Panc1 (cell line): ENCODE measurements at regions of chr10 and their contacts with region 1.

Region 1: DNA sequence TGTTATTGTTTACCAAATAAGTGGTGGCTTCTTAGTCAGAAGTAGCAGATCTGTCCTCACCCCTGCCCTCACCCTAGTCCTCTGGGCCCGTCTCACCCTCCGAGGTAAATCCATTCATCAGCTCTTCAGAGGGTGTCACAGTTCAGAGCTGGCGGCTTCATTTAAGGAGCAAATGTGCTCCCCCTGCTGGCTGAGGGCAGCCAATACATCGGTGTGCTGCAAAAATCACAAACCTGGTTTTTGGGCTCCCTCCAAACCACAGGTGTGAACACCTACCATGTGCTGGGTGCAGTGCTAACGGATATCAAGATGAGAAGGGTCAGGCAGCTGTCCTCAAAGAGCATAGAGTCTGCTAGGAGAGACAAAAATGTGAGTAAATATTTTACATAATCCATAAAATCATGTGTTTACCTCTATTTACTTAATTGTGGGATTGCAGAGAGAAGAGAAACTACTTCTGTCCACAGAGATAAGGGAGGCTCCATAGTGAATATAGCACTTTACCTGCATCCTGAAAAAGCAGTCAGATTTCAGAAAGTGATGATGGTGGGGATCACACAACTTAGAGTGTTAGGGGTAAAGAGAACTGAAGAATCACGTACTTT is 15.5 kb upstream of the CRTAC1 start:
- DNase-seq: peak; percentile 53
- ATAC-seq: peak; percentile 86
- H3K4me3 ChIP-seq: no peak overlapping the region
- H3K27ac ChIP-seq: no peak overlapping the region
- H3K4me1 ChIP-seq: no peaks in the 10 kb centered on the region
- H3K27me3 ChIP-seq: peaks cover 25% of the 10 kb centered on the region
- CTCF ChIP-seq: peak; percentile 99

Region 2: DNA sequence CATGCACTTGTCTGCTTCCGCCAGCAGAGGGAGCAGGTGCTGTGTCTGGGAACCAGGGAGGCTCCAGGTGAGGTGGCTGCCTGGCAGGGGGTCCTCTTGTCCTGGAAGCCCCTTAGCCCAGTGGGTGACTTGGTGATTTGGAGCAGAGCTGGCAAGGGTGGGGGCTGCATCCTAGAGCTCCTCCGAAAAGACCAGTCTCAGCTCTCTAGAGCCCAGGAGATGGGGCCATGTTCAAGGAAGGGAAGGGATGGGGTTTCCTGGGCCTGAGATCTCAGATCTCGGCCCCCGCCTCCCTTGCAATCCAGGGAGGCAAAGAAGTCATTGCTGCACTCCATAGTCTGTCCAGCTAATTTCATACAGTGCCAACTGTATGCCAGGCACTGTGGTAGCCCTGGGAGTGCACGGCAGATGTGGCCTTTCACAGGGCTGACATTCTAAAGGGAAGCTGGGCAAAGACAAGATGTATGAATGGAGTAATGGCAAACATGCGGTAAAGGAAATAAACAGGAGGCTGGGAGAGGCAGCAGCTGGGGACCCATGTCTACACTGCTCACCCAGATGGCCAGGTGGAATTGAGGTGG is 253.7 kb before region 1 on chr10:
- CTCF ChIA-PET with region 1: interaction called, 4 read pairs
- POLR2A ChIA-PET with region 1: no interaction called
- in situ Hi-C with region 1: no loop called
- intact Hi-C with region 1: loop called (anchors 10 kb)
- DNase-seq: peak; percentile 63
- ATAC-seq: peak; percentile 32
- H3K4me3 ChIP-seq: no peak overlapping the region
- H3K27ac ChIP-seq: no peak overlapping the region
- H3K4me1 ChIP-seq: no peaks in the 10 kb centered on the region
- H3K27me3 ChIP-seq: no peaks in the 10 kb centered on the region; the same call in 1 of the 2 replicates
- CTCF ChIP-seq: peak; percentile 99

Region 3: GRCh38 chr10:97888641-97889262 is 157.1 kb before region 1 on chr10:
- CTCF ChIA-PET with region 1: no interaction called
- POLR2A ChIA-PET with region 1: no interaction called
- in situ Hi-C with region 1: no loop called
- intact Hi-C with region 1: no loop called
- DNase-seq: no peak
- ATAC-seq: peak; percentile 64
- H3K4me3 ChIP-seq: no peak overlapping the region
- H3K27ac ChIP-seq: no peak overlapping the region
- H3K4me1 ChIP-seq: peaks cover 4% of the 10 kb centered on the region; the same call in 1 of the 2 replicates
- H3K27me3 ChIP-seq: no peaks in the 10 kb centered on the region; the same call in 1 of the 2 replicates
- CTCF ChIP-seq: no peak

Region 4: GRCh38 chr10:97914837-97915211 is 131.1 kb before region 1 on chr10:
- CTCF ChIA-PET with region 1: interaction called, 53 read pairs
- POLR2A ChIA-PET with region 1: no interaction called
- in situ Hi-C with region 1: no loop called
- intact Hi-C with region 1: loop called (anchors 1 kb)
- DNase-seq: peak; percentile 35
- ATAC-seq: peak; percentile 93
- H3K4me3 ChIP-seq: no peak overlapping the region
- H3K27ac ChIP-seq: no peak overlapping the region
- H3K4me1 ChIP-seq: peaks cover 3% of the 10 kb centered on the region; the same call in 1 of the 2 replicates
- H3K27me3 ChIP-seq: peaks cover 12% of the 10 kb centered on the region
- CTCF ChIP-seq: peak; percentile 99